ENCODE measurements at regions of chr3 and their contacts with region 1.

Region 1: GRCh38 chr3:183306798-183307671 is 54.0 kb downstream of the B3GNT5 start:
- DNase-seq: peak; percentile 79
- H3K4me3 Mint-ChIP-seq: peak overlapping the region; percentile 20
- H3K27ac Mint-ChIP-seq: peak overlapping the region; percentile 65
- H3K4me1 Mint-ChIP-seq: peaks cover 28% of the 10 kb centered on the region
- H3K27me3 Mint-ChIP-seq: no peaks in the 10 kb centered on the region

Region 2: GRCh38 chr3:183369117-183369516 is 62.1 kb after region 1 on chr3:
- intact Hi-C with region 1: loop called (anchors 5 kb)
- DNase-seq: no peak
- H3K4me3 Mint-ChIP-seq: no peak overlapping the region
- H3K27ac Mint-ChIP-seq: no peak overlapping the region
- H3K4me1 Mint-ChIP-seq: peaks cover 24% of the 10 kb centered on the region
- H3K27me3 Mint-ChIP-seq: no peaks in the 10 kb centered on the region

Region 3: GRCh38 chr3:183447206-183448001 is 140.4 kb after region 1 on chr3:
- intact Hi-C with region 1: no loop called
- DNase-seq: peak; percentile 94
- H3K4me3 Mint-ChIP-seq: peak overlapping the region; percentile 98
- H3K27ac Mint-ChIP-seq: peak overlapping the region; percentile 90
- H3K4me1 Mint-ChIP-seq: peaks cover 15% of the 10 kb centered on the region
- H3K27me3 Mint-ChIP-seq: peaks cover 14% of the 10 kb centered on the region